Upper lobe of right lung (tissue), 1 donor: ENCODE measurements at regions of chr12 and their contacts with region 1.

Region 1: GRCh38 chr12:56468216-56469006 is at the start of gene SPRYD4:
- DNase-seq: peak; percentile 96
- ATAC-seq: peak; percentile 98
- H3K4me3 ChIP-seq: peak within 1 kb of the TSS; percentile 99
- H3K27ac ChIP-seq: peak within 1 kb of the TSS; percentile 95
- H3K4me1 ChIP-seq: peaks cover 15% of the 10 kb centered on the region
- H3K27me3 ChIP-seq: no peaks in the 10 kb centered on the region
- CTCF ChIP-seq: peak; percentile 31
- total RNA-seq, gene SPRYD4: 3.2 TPM

Region 2: GRCh38 chr12:56189918-56190694 is 278.3 kb before region 1 on chr12:
- intact Hi-C with region 1: loop called (anchors 10 kb)
- DNase-seq: peak; percentile 92
- ATAC-seq: peak; percentile 67
- H3K4me3 ChIP-seq: peak overlapping the region; percentile 82
- H3K27ac ChIP-seq: peak overlapping the region; percentile 93
- H3K4me1 ChIP-seq: peaks cover 25% of the 10 kb centered on the region
- H3K27me3 ChIP-seq: no peaks in the 10 kb centered on the region
- CTCF ChIP-seq: no peak

Region 3: DNA sequence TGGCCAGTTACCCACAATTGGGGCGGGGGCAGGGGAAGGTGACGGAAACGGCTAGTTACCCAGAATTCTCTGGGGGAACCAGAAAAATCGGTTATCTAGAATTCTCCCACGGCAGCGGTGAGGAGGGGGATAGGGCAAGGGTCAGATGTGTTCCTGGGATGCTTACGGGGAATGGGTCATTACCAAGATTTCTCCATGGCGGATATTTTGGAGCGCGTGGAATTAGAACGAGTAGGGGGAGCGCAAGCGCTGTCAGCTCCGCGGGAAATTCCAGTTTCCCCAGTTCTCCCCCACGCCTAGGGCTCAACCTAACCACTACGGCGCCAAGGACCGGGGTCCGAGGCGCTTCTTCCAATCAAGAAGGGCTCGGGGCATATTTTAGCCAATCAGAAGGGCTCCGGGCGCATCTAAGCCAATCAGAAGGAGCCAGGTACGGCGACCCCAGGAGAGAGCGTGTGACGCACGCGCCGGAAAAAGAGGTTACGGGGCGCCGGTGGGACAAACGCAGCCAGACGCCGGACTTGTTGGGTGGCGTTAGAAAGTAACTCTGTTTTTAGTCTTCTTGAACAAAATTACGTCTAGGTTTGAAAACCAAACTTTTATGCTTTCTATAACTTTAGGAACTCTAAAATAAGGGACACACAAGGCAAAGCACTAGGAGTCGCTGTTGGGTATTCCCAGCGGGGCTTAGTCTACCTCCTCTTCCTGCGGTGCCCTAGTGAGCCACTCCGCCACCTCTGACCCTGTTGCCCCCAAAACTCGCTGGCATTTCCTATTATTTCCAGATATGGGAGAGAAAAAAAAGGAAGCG is 134.5 kb before region 1 on chr12 and contains the start of gene PAN2:
- intact Hi-C with region 1: loop called (anchors 10 kb)
- DNase-seq: peak; percentile 96
- ATAC-seq: peak; percentile 99
- H3K4me3 ChIP-seq: peak within 1 kb of the TSS; percentile 71
- H3K27ac ChIP-seq: peak within 1 kb of the TSS; percentile 97
- H3K4me1 ChIP-seq: peaks cover 12% of the 10 kb centered on the region
- H3K27me3 ChIP-seq: no peaks in the 10 kb centered on the region
- CTCF ChIP-seq: peak; percentile 56
- total RNA-seq, gene PAN2: 84.4 TPM

Region 4: GRCh38 chr12:56645717-56646446 is 177.5 kb after region 1 on chr12 and contains the start of gene ATP5F1B:
- intact Hi-C with region 1: no loop called
- DNase-seq: peak; percentile 96
- ATAC-seq: peak; percentile 99
- H3K4me3 ChIP-seq: peak within 1 kb of the TSS; percentile 100
- H3K27ac ChIP-seq: peak within 1 kb of the TSS; percentile 97
- H3K4me1 ChIP-seq: peaks cover 22% of the 10 kb centered on the region
- H3K27me3 ChIP-seq: no peaks in the 10 kb centered on the region
- CTCF ChIP-seq: no peak
- total RNA-seq, gene ATP5F1B: 338 TPM